Dorsolateral prefrontal cortex (tissue), 120 donors: ENCODE measurements at regions of chr6 and their contacts with region 1.

Region 1: DNA sequence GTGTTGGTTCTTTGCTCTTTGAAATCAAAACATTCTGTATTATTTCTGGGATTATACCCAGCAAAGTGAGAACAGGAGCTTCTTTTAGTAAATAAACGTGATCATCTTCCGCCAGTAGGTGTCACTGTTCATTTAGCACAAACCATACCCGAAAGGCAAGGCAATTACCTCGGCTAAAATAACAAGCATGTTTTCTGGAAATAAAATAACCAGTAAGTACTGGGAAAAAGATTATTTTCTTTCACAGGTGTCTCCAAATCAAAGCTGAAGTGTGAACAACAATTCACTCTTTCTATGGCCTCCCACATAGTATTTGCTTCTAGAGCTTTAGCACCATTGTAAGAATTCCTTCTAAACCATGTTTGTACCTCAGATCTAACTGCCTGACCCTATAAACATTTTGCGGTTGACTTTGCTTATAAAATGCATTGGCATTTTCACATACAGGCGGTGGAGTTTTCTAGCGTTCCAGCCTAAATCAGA is 144.6 kb upstream of the AGPAT4 start:
- DNase-seq: peak in 3 of 10 donors; percentile 17 to 65 (median 60)
- H3K4me3 ChIP-seq: no peak overlapping the region
- H3K27ac ChIP-seq: peak overlapping the region in 30 of 59 donors; percentile 2 to 76 (median 42)
- H3K27me3 ChIP-seq: no peaks in the 10 kb centered on the region
- CTCF ChIP-seq: peak; percentile 71 to 94 (median 82)

Region 2: GRCh38 chr6:161327360-161327953 is 91.0 kb before region 1 on chr6:
- intact Hi-C with region 1: no loop called
- DNase-seq: no peak
- H3K4me3 ChIP-seq: no peak overlapping the region
- H3K27ac ChIP-seq: no peak overlapping the region
- H3K27me3 ChIP-seq: no peaks in the 10 kb centered on the region
- CTCF ChIP-seq: no peak

Region 3: GRCh38 chr6:161356167-161356854 is 62.2 kb before region 1 on chr6:
- intact Hi-C with region 1: no loop called
- DNase-seq: no peak
- H3K4me3 ChIP-seq: no peak overlapping the region
- H3K27ac ChIP-seq: no peak overlapping the region
- H3K27me3 ChIP-seq: no peaks in the 10 kb centered on the region
- CTCF ChIP-seq: no peak

Region 4: GRCh38 chr6:161444464-161444863 is 26.0 kb after region 1 on chr6:
- intact Hi-C with region 1: loop called in 1 of 2 experiments (anchors 1 kb)
- DNase-seq: peak; percentile 53 to 77 (median 72)
- H3K4me3 ChIP-seq: peak overlapping the region in 25 of 59 donors; percentile 1 to 42 (median 28)
- H3K27ac ChIP-seq: peak overlapping the region in 14 of 59 donors; percentile 6 to 59 (median 33)
- H3K27me3 ChIP-seq: no peaks in the 10 kb centered on the region
- CTCF ChIP-seq: peak in 54 of 56 donors; percentile 21 to 71 (median 49)

Region 5: DNA sequence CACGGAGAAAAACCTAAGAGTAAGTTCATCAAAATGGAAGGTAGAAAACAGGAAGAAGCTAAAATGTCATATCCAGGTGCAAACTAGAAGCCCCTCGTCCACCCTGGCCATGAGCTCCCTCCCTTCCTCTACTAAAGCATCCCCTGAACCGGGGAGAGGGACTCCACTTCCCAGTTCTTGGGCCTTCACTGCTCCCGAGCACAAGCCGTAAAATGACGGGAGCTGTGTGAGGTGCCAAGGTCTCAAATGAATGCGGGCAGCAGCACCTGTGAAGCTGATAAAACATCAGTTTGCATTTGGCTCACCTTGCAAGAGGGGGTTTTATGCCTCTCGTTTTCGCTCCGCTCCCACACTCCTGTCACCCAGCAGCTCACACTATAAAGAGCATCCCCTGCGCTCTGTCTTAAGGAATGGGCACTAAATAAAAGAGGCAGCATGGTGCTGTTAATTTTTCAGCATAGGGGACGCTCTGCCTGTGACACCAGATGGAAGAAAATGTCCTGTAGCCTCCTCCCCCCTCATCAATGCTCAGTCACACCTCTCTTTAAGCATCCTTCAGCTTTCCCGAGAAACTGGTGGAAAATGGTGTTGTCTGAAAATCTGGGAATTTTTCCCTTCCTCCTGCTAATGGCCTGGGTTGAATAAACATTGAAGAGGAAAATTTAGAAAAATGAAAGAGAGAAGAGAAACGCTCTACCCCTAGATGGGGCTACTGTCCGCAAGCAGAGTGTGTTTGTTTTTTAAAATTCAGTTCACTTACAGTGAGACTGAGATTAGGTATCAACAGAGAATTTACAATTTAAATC is 418.3 kb after region 1 on chr6:
- intact Hi-C with region 1: loop called in 1 of 2 experiments (anchors 10 kb)
- DNase-seq: no peak
- H3K4me3 ChIP-seq: peak overlapping the region in 2 of 59 donors; percentile 16 to 20
- H3K27ac ChIP-seq: peak overlapping the region in 3 of 59 donors; percentile 7 to 53 (median 16)
- H3K27me3 ChIP-seq: no peaks in the 10 kb centered on the region
- CTCF ChIP-seq: peak; percentile 23 to 70 (median 56)